H1 (cell line): ENCODE measurements at regions of chr5 and their contacts with region 1.

Region 1: DNA sequence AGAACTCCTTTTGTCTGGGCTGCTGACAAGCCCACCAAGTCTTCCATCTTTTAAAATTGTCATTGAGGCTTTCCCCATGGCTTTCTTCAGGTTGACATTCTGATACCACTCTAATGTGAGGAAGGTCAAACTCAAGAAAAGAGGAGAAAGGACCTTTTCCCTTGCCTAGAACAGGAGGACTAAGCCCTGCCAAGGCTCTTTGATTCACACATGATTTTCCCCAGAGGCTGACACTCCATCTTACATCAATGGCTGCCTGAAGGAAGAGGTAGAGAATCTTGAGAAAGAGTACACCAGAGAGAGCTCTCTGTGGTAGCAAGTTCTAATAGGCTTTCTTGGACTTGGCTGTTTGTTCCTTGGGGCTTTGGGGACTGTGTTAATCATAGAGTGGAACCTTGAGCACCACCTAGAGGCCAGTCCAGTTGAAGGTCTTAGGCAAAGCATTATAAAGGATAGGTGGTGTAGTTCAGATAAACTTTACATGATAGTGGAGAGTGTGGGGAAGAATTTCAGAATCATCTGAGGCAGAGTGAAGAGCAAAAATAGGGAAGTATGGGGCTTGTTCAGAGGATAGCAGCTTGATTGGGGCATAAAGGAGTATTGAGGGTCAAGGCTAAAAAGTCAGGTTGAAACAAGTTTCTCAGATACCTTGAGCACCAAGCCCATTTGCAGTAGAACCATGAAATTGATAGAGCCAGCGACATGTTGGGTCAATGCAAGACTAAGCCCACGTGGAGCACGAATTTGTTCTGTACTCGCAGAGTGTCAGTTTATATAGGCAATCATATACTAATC is 36.7 kb downstream of the NDFIP1 start:
- DNase-seq: peak in 1 of 2 experiments; percentile 63
- H3K4me3 ChIP-seq: no peak overlapping the region
- H3K27ac ChIP-seq: no peak overlapping the region
- H3K4me1 ChIP-seq: peaks cover 0 to 3% (median under 1%) of the 10 kb centered on the region in 4 experiments; a peak in 1 of 7 replicates
- H3K27me3 ChIP-seq: no peaks in the 10 kb centered on the region
- CTCF ChIP-seq: peak in 2 of 3 experiments; percentile 76 to 80; a peak in 3 of 4 replicates
- EP300 ChIP-seq: no peak
- POLR2A ChIP-seq: no peak
- RAD21 ChIP-seq: peak; percentile 66 to 76

Region 2: DNA sequence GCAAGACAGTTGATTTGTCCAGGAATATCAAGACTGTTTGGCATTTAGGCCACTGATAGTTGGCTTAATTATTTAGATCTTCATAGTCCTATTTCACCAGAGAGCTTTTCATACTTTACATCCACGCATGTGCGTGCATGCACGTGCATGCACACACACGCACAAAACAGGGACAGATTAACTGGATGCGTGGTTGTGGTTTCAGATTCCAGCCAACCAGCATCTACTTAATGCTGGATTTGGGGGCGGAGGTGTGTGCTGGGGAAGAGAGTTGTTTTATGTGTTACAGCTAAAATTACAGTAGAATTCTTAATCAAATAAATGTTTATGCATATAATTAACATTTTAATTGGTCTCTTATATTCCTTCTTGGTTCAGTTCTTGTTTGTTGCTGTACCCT is 169.1 kb before region 1 on chr5:
- CTCF ChIA-PET with region 1: interaction called, 26 read pairs
- POLR2A ChIA-PET with region 1: no interaction called
- DNase-seq: no peak
- H3K4me3 ChIP-seq: no peak overlapping the region
- H3K27ac ChIP-seq: no peak overlapping the region
- H3K4me1 ChIP-seq: no peaks in the 10 kb centered on the region
- H3K27me3 ChIP-seq: no peaks in the 10 kb centered on the region
- CTCF ChIP-seq: no peak
- EP300 ChIP-seq: no peak
- POLR2A ChIP-seq: no peak
- RAD21 ChIP-seq: no peak

Region 3: GRCh38 chr5:142000703-142001484 is 144.4 kb before region 1 on chr5:
- CTCF ChIA-PET with region 1: interaction called, 18 read pairs
- POLR2A ChIA-PET with region 1: interaction called, 3 read pairs
- DNase-seq: peak in 1 of 2 experiments; percentile 41
- H3K4me3 ChIP-seq: no peak overlapping the region
- H3K27ac ChIP-seq: no peak overlapping the region
- H3K4me1 ChIP-seq: no peaks in the 10 kb centered on the region
- H3K27me3 ChIP-seq: no peaks in the 10 kb centered on the region
- CTCF ChIP-seq: peak; percentile 23 to 53 (median 37)
- EP300 ChIP-seq: no peak
- POLR2A ChIP-seq: no peak
- RAD21 ChIP-seq: peak; percentile 32 to 49; a peak in 3 of 4 replicates

Region 4: GRCh38 chr5:142024771-142025304 is 120.5 kb before region 1 on chr5:
- CTCF ChIA-PET with region 1: interaction called, 10 read pairs
- POLR2A ChIA-PET with region 1: no interaction called
- DNase-seq: peak; percentile 77 to 84
- H3K4me3 ChIP-seq: peak overlapping the region; percentile 10 to 65 (median 56)
- H3K27ac ChIP-seq: no peak overlapping the region
- H3K4me1 ChIP-seq: no peaks in the 10 kb centered on the region
- H3K27me3 ChIP-seq: no peaks in the 10 kb centered on the region
- CTCF ChIP-seq: peak in 1 of 3 experiments; percentile 13; a peak in 1 of 4 replicates
- EP300 ChIP-seq: 0 out of 3 replicates have a peak, but pooled peaks of 1 of the 2 experiments have one; percentile 21
- POLR2A ChIP-seq: peak in 1 of 2 experiments; percentile 70; a peak in 2 of 3 replicates
- RAD21 ChIP-seq: no peak

Region 5: DNA sequence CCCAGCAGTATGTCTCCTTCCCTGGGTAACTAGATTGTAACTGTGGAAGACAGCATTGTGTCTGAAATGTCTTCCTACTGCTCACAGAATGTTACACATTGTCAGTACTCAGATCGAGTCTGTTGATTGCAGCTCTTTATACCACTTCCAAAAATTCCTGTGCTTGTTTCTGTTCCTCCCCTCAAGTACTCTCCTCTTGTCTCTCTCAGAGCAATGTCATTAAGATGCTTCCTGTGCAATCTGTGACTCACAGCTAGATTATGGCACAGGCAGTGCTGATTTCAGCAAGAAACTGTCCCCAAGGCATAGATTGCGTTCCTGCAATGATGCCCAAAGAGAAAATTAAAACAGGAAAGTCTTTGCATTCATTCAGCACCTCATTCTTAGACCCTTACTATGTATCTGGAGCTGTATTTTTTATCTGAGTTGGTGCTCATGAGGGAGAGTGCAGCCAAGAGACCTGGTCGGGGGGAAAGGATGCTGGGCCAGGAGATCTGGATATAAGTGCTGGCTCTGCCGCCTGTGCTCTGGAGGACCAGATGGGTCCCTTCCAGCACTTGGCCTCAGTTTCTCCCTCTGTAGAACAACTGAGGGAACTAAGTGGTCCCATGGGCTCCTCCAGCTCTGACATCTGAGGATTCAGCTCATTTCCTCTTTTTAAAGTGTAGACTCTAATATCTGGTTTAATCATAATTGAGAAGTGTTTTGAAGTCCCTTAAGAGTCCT is 91.7 kb before region 1 on chr5:
- CTCF ChIA-PET with region 1: interaction called, 18 read pairs
- POLR2A ChIA-PET with region 1: no interaction called
- DNase-seq: no peak
- H3K4me3 ChIP-seq: no peak overlapping the region
- H3K27ac ChIP-seq: no peak overlapping the region
- H3K4me1 ChIP-seq: peaks cover 0 to 5% (median 1%) of the 10 kb centered on the region in 4 experiments; a peak in 3 of 7 replicates
- H3K27me3 ChIP-seq: no peaks in the 10 kb centered on the region
- CTCF ChIP-seq: no peak
- EP300 ChIP-seq: no peak
- POLR2A ChIP-seq: no peak
- RAD21 ChIP-seq: no peak

Region 6: DNA sequence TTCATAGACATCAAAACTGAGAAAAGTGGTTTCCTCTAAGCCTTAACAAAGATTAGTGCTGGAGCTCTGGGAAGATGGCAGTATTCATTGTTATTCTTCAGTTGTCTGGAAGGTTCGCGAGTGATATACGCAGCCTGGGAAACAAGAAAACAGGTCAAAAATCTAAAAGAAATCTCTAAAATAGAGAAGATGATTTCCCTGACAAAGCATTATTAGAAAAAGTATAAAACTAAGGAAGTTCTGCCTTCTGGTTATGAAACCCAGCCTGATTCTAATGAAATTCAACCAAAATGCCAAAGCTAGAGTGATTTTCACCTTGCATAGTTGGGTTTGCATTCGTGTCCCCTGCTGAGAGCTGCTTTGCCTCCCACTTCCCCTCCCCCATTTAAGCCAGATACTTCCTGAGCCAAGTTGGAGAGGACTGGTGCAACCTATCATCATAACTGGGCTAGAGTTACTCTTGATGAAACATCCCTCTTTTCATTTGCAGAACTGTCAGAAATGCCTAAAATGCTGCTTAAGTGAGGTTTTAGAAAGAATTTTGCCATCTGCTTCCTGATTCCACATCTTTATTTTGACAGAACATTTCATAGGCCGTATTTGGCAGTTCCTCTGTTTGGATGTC is 11.6 kb after region 1 on chr5:
- CTCF ChIA-PET with region 1: interaction called, 14 read pairs
- POLR2A ChIA-PET with region 1: no interaction called
- DNase-seq: no peak
- H3K4me3 ChIP-seq: peak overlapping the region in 2 of 4 experiments; percentile 5 to 26; a peak in 3 of 8 replicates
- H3K27ac ChIP-seq: no peak overlapping the region
- H3K4me1 ChIP-seq: peaks cover 0 to 17% (median 7%) of the 10 kb centered on the region in 4 experiments; a peak in 4 of 7 replicates
- H3K27me3 ChIP-seq: no peaks in the 10 kb centered on the region
- CTCF ChIP-seq: no peak
- EP300 ChIP-seq: 0 out of 3 replicates have a peak, but pooled peaks of 1 of the 2 experiments have one; percentile 49
- POLR2A ChIP-seq: no peak
- RAD21 ChIP-seq: peak in 1 of 2 experiments; percentile 33; a peak in 1 of 4 replicates

Region 7: GRCh38 chr5:142204219-142204618 is 58.9 kb after region 1 on chr5:
- CTCF ChIA-PET with region 1: no interaction called
- POLR2A ChIA-PET with region 1: no interaction called
- DNase-seq: no peak
- H3K4me3 ChIP-seq: no peak overlapping the region
- H3K27ac ChIP-seq: no peak overlapping the region
- H3K4me1 ChIP-seq: peaks cover 0 to 7% (median 1%) of the 10 kb centered on the region in 4 experiments; a peak in 6 of 7 replicates
- H3K27me3 ChIP-seq: peaks cover 0 to 2% (median 0%) of the 10 kb centered on the region in 4 experiments; a peak in 1 of 7 replicates
- CTCF ChIP-seq: no peak
- EP300 ChIP-seq: no peak
- POLR2A ChIP-seq: no peak
- RAD21 ChIP-seq: no peak

Region 8: DNA sequence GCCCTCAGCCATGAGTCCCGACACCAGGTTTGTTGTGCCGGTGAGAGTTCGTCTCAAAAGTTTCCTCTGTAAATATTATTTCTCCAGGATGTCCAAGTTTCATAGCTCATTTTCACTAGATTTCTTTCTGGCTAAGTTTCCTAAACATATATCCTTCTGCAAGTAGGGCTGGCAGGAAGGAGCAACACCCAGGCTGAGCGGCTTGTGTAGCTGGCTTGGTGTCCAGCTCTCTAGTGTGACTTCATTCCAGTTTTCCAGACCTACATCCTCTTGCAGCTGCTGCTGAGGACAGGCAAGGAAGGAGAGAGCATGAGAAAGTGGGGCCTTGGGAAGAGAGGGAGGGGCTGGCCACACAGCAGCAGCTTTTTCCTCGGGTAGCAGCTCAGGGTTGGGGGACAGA is 460.3 kb after region 1 on chr5:
- CTCF ChIA-PET with region 1: interaction called, 11 read pairs
- POLR2A ChIA-PET with region 1: no interaction called
- DNase-seq: no peak
- H3K4me3 ChIP-seq: no peak overlapping the region
- H3K27ac ChIP-seq: no peak overlapping the region
- H3K4me1 ChIP-seq: no peaks in the 10 kb centered on the region; a peak in 1 of 7 replicates
- H3K27me3 ChIP-seq: no peaks in the 10 kb centered on the region
- CTCF ChIP-seq: no peak
- EP300 ChIP-seq: no peak
- POLR2A ChIP-seq: no peak
- RAD21 ChIP-seq: no peak